Activated CD4-positive, alpha-beta T cell treated with anti-CD3 and anti-CD28 coated beads, Interleukin-2, amount 10 ng/mL, durations not matched to agents 24 days and 14 days (primary cell): ENCODE measurements at regions of chr7 and their contacts with region 1.

Region 1: DNA sequence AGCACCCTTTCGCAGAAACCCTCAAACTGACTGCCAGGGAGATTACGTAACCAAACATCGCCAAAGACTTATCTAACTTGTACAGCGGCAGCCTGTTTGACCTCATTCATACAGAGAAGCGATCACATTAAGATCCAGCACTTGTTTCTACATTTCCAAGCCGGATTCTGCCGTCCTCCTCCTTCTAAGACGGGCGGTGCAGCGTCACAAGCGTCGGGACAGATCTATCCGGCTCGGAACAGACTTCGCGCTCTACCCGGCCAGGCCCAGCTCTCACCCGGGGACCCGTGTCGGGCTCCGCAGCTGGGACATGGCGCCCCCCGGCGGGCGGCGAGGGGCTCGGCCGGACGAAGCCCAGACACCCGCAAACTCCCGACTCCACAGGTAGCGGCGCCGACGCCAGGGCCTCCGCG is 373 bp downstream of the H2AZ2 start:
- DNase-seq: peak; percentile 95
- H3K4me3 Mint-ChIP-seq: peak overlapping the region; percentile 99
- H3K27ac Mint-ChIP-seq: peak overlapping the region; percentile 98
- H3K4me1 Mint-ChIP-seq: peaks cover 52% of the 10 kb centered on the region
- H3K27me3 Mint-ChIP-seq: peaks cover 2% of the 10 kb centered on the region

Region 2: DNA sequence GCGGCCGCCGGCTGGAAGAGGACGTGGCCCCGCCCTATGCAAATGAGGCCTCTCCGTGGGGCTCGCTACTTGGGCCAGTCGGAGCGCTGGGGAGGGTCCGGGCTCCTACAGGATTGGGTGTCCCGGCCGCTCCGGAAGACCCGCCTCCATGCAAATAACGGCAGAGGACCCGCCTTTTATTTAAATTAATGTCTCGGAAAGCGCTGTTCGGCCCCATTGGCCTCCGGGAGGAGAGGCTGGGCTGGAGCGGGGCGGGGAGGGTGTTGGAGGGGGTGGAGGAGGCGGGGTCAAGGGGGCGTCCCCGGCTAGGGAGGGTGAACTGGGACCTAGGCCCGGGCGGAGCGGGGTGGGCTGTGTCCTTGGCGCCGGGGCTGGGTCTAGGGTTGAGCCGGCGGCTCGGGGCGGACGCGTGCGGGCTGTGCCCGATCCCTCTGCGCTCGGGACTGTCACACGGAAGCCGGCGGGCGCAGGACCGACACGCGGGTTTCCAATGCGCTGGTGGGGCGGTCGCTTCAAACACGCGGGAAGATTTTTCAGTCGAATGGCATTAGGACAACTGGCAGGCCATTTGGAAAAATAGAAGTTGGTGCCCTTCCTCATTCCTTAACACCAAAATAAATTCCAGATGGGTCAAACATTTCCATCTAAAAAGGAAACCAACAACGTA is 764.8 kb before region 1 on chr7:
- intact Hi-C with region 1: loop called (anchors 1 kb)
- DNase-seq: peak; percentile 99
- H3K4me3 Mint-ChIP-seq: peak overlapping the region; percentile 85
- H3K27ac Mint-ChIP-seq: peak overlapping the region; percentile 80
- H3K4me1 Mint-ChIP-seq: peaks cover 26% of the 10 kb centered on the region
- H3K27me3 Mint-ChIP-seq: no peaks in the 10 kb centered on the region

Region 3: GRCh38 chr7:44587843-44588711 is 259.4 kb before region 1 on chr7:
- intact Hi-C with region 1: loop called (anchors 1 kb)
- DNase-seq: peak; percentile 90
- H3K4me3 Mint-ChIP-seq: no peak overlapping the region
- H3K27ac Mint-ChIP-seq: no peak overlapping the region
- H3K4me1 Mint-ChIP-seq: peaks cover 15% of the 10 kb centered on the region
- H3K27me3 Mint-ChIP-seq: peaks cover 3% of the 10 kb centered on the region

Region 4: GRCh38 chr7:44638611-44639557 is 208.6 kb before region 1 on chr7:
- intact Hi-C with region 1: loop called (anchors 2 kb)
- DNase-seq: peak; percentile 95
- H3K4me3 Mint-ChIP-seq: peak overlapping the region; percentile 82
- H3K27ac Mint-ChIP-seq: peak overlapping the region; percentile 99
- H3K4me1 Mint-ChIP-seq: peaks cover 66% of the 10 kb centered on the region
- H3K27me3 Mint-ChIP-seq: no peaks in the 10 kb centered on the region

Region 5: GRCh38 chr7:44695381-44696155 is 151.9 kb before region 1 on chr7:
- intact Hi-C with region 1: no loop called
- DNase-seq: no peak
- H3K4me3 Mint-ChIP-seq: no peak overlapping the region
- H3K27ac Mint-ChIP-seq: no peak overlapping the region
- H3K4me1 Mint-ChIP-seq: no peaks in the 10 kb centered on the region
- H3K27me3 Mint-ChIP-seq: no peaks in the 10 kb centered on the region

Region 6: DNA sequence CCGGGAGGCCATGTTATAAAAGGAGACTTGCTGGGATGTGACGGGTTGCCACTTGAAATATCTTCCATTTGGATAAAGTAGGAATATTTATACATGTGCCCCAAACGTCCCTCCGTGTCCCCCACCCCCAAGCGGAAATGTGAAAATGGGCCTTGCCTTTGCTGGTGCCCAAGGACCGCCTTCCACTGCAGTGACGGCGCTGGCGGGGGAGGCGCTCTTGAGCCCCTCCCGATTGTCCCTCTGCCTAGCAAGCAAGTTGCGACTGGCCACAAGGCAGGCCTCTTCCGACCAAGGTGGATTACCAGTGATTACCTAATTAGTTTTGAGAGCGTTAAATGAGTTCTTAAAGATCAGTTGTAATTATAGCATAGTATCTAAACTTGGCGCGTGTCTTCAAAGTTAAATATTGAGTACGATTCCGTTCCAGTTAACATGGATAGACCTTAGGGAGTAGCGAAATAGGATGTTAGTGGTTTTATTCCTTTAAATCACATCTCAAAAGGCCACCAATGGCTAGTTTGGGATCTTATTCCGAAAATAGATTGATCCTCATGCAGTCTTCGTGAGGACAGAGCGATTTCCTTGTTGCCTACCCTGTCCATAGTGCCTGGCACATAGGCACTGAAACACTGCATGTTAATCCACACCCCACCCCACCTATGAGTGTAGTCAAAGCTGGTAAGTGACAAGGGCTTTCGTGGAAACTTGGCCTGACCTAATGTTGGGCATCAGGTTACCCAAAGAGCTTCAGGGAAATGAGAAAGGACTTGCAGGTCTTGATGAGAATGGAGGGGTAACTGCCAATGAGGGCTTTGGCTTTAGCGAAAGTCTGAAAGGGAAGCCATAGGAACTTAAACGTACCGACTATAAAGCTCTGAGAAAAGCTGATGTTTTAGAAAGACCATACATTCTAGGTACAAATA is 49.9 kb before region 1 on chr7:
- intact Hi-C with region 1: loop called (anchors 1 kb)
- DNase-seq: peak; percentile 95
- H3K4me3 Mint-ChIP-seq: peak overlapping the region; percentile 98
- H3K27ac Mint-ChIP-seq: peak overlapping the region; percentile 97
- H3K4me1 Mint-ChIP-seq: peaks cover 31% of the 10 kb centered on the region
- H3K27me3 Mint-ChIP-seq: no peaks in the 10 kb centered on the region

Region 7: GRCh38 chr7:44914992-44915607 is 67.6 kb after region 1 on chr7:
- intact Hi-C with region 1: loop called (anchors 2 kb)
- DNase-seq: peak; percentile 95
- H3K4me3 Mint-ChIP-seq: peak overlapping the region; percentile 45
- H3K27ac Mint-ChIP-seq: peak overlapping the region; percentile 85
- H3K4me1 Mint-ChIP-seq: peaks cover 16% of the 10 kb centered on the region
- H3K27me3 Mint-ChIP-seq: no peaks in the 10 kb centered on the region

Region 8: GRCh38 chr7:44944821-44945220 is 97.3 kb after region 1 on chr7:
- intact Hi-C with region 1: no loop called
- DNase-seq: no peak
- H3K4me3 Mint-ChIP-seq: no peak overlapping the region
- H3K27ac Mint-ChIP-seq: no peak overlapping the region
- H3K4me1 Mint-ChIP-seq: no peaks in the 10 kb centered on the region
- H3K27me3 Mint-ChIP-seq: peaks cover 47% of the 10 kb centered on the region

Region 9: GRCh38 chr7:44986218-44987053 is 138.9 kb after region 1 on chr7:
- intact Hi-C with region 1: loop called (anchors 2 kb)
- DNase-seq: peak; percentile 99
- H3K4me3 Mint-ChIP-seq: peak overlapping the region; percentile 99
- H3K27ac Mint-ChIP-seq: peak overlapping the region; percentile 99
- H3K4me1 Mint-ChIP-seq: peaks cover 55% of the 10 kb centered on the region
- H3K27me3 Mint-ChIP-seq: no peaks in the 10 kb centered on the region